ENCODE measurements at regions of chr10 and their contacts with region 1.

Region 1: GRCh38 chr10:124791378-124792348 is at the start of gene EEF1AKMT2:
- DNase-seq: peak; percentile 78 to 87 (median 85)
- H3K4me3 ChIP-seq: peak within 1 kb of the TSS; percentile 97 to 99
- H3K4me3 Mint-ChIP-seq: peak within 1 kb of the TSS; percentile 92 to 99 (median 98)
- H3K27ac ChIP-seq: peak within 1 kb of the TSS; percentile 76
- H3K27ac Mint-ChIP-seq: peak within 1 kb of the TSS; percentile 78 to 97 (median 93)
- H3K4me1 ChIP-seq: peaks cover 16% of the 10 kb centered on the region
- H3K4me1 Mint-ChIP-seq: peaks cover 5 to 28% (median 17%) of the 10 kb centered on the region in 4 donors
- H3K27me3 ChIP-seq: no peaks in the 10 kb centered on the region
- H3K27me3 Mint-ChIP-seq: no peaks in the 10 kb centered on the region
- total RNA-seq, gene EEF1AKMT2: 20.0 to 24.2 TPM

Region 2: DNA sequence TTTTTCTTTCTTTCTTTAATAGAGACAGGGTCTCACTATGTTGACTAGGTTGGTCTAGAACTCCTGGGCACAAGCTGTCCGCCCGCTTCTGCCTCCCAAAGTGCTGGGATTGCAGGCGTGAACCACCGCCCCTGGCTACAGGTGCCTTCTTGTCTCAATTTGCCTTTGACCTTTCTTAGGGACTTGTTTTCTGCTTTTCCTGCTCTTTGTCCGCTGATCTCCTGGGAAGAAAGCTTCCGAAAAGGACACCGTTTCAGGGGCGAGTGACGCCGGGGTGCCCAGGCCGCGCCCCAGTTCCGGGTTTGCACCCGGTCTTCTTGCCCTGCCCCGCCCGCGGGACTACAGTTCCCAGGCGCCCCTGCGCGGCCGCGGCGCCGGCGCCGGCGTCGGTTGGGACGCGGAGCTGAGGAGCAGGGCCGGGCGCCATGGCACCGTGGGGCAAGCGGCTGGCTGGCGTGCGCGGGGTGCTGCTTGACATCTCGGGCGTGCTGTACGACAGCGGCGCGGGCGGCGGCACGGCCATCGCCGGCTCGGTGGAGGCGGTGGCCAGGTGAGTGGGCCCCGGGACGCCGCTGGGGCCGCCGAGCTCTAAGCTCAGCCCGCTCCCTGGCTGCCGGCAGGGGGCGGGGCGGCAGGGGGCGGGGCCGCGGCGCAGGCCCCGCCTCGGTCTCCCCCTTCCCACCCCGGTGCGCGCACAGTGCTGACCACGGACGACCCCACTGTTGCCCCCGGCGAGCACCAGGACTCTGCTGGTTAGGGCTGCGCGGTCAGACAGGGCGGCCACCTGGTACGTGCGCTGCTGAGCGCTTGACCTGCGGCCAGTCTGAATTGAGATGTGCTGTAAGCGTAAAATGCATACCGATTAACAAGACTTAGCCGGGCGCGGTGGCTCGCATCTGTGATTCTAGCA is 330.0 kb before region 1 on chr10 and contains the start of gene LHPP:
- CTCF ChIA-PET with region 1: no interaction called
- POLR2A ChIA-PET with region 1: interaction called, 6 read pairs
- intact Hi-C with region 1: loop called (anchors 5 kb)
- DNase-seq: peak; percentile 85 to 90 (median 86)
- H3K4me3 ChIP-seq: peak within 1 kb of the TSS; percentile 42 to 76
- H3K4me3 Mint-ChIP-seq: peak within 1 kb of the TSS; percentile 88 to 96 (median 92)
- H3K27ac ChIP-seq: peak within 1 kb of the TSS; percentile 59
- H3K27ac Mint-ChIP-seq: peak within 1 kb of the TSS; percentile 80 to 98 (median 97)
- H3K4me1 ChIP-seq: peaks cover 27% of the 10 kb centered on the region
- H3K4me1 Mint-ChIP-seq: peaks cover 21 to 36% (median 29%) of the 10 kb centered on the region in 4 donors
- H3K27me3 ChIP-seq: no peaks in the 10 kb centered on the region
- H3K27me3 Mint-ChIP-seq: peaks cover 4 to 5% of the 10 kb centered on the region in 2 donors
- total RNA-seq, gene LHPP: 17.9 to 18.3 TPM

Region 3: DNA sequence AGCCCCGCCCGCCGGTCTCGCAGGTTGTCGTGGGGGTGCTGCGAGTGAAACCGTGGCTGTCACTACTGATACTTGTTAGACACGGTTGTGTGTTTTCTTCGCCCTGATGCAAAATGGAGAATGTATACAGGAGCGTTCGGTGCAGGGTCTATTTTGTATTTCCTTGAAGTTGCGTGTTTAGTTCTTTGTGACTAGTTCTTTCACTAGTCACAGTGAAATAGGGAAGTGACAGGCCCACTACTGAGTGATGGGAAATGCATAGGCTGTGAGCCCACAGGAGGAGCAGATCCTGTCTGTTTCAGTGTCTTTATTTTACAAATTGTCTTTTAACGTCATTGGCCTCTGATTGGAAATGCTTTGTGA is 10.6 kb after region 1 on chr10:
- CTCF ChIA-PET with region 1: interaction called, 5 read pairs
- POLR2A ChIA-PET with region 1: interaction called, 40 read pairs
- intact Hi-C with region 1: loop called (anchors 1 kb)
- DNase-seq: peak in 2 of 5 donors; percentile 7 to 46
- H3K4me3 ChIP-seq: peak overlapping the region; percentile 76 to 78
- H3K4me3 Mint-ChIP-seq: peak overlapping the region; percentile 87 to 98 (median 90)
- H3K27ac ChIP-seq: peak overlapping the region; percentile 83
- H3K27ac Mint-ChIP-seq: peak overlapping the region; percentile 76 to 94 (median 90)
- H3K4me1 ChIP-seq: peaks cover 14% of the 10 kb centered on the region
- H3K4me1 Mint-ChIP-seq: peaks cover 12 to 20% (median 17%) of the 10 kb centered on the region in 4 donors
- H3K27me3 ChIP-seq: no peaks in the 10 kb centered on the region
- H3K27me3 Mint-ChIP-seq: peaks cover 3% of the 10 kb centered on the region in 2 donors

Region 4: GRCh38 chr10:124975977-124976514 is 184.4 kb after region 1 on chr10:
- CTCF ChIA-PET with region 1: no interaction called
- POLR2A ChIA-PET with region 1: no interaction called
- intact Hi-C with region 1: no loop called
- DNase-seq: no peak
- H3K4me3 ChIP-seq: no peak overlapping the region
- H3K4me3 Mint-ChIP-seq: peak overlapping the region in 1 of 8 donors; percentile 33
- H3K27ac ChIP-seq: no peak overlapping the region
- H3K27ac Mint-ChIP-seq: peak overlapping the region in 5 of 7 donors; percentile 3 to 74 (median 62)
- H3K4me1 ChIP-seq: no peaks in the 10 kb centered on the region
- H3K4me1 Mint-ChIP-seq: peaks cover 18 to 31% (median 28%) of the 10 kb centered on the region in 4 donors
- H3K27me3 ChIP-seq: no peaks in the 10 kb centered on the region
- H3K27me3 Mint-ChIP-seq: no peaks in the 10 kb centered on the region